Spleen (tissue), 13 donors: ENCODE measurements at regions of chr20 and their contacts with region 1.

Region 1: DNA sequence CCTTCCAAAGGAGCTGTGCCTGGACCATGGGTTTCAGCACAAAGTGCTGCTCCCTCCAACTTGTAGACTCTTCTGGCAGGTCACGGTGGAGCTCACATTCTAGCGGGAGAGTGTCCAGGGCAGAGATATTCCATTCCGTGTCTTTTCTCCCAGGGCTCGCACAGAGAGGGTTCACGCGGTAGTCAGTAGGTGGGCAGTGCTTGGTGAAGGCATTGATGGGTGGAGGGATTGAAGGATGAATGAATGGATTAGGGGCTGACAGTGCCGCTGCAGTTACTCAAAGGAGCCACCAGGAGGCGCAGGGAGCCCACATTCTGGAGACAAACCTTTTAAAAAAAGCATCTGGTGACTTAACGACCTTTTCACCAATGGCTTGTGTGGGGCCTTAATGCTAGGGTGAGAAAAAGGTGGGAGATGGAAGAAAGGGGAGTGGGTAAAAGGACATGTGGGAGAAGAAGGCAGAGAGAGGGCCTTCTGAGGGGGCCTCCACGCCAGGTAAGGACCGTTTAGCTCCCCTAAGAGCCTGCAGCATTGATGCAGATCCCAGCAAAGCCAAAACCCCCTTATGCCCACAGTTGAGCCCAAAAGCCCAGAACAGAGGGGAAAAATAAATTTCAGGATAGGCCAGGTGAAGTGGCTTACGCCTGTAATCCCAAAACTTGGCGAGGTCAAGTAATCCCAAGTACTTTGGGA is 17.5 kb upstream of the FAM110A start:
- DNase-seq: peak; percentile 82
- H3K4me3 ChIP-seq: no peak overlapping the region
- H3K27ac ChIP-seq: no peak overlapping the region
- H3K4me1 ChIP-seq: peaks cover 0 to 6% (median 3%) of the 10 kb centered on the region in 6 donors
- H3K27me3 ChIP-seq: peaks cover 0 to 37% (median 0%) of the 10 kb centered on the region in 7 donors
- CTCF ChIP-seq: peak; percentile 94 to 99 (median 97)
- POLR2A ChIP-seq: no peak

Region 2: DNA sequence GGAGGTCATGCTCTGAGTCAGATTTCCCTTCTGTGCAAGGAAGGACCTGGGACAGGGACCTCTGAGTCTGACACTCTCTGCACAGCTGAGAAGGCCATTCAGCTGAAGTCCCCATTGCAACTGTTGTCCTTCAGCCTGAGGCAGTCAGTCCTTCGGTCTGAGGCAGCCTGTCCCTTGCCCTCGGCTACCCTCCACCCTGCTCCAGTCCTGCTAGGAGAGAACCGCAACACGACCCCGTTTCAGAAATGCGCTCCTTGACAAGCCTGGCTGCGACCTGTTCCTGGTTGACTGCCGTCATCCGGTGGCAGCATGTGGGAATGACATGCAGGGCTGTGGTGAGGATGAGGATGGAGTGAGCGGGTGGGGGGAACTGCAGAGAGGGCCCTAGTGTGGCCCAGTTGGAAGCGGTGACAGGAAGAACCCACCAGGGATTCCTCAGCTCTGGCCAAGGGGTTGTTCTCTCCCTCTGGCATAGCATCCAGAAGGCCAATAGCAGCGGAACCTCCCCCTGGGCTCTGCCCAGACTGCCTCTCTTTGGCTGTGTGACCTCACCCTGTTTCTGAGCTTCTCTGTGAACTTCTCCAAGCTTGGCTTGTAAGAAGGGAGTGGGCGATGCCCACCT is 140.4 kb after region 1 on chr20:
- intact Hi-C with region 1: loop called (anchors 2 kb)
- DNase-seq: peak; percentile 91
- H3K4me3 ChIP-seq: no peak overlapping the region
- H3K27ac ChIP-seq: no peak overlapping the region
- H3K4me1 ChIP-seq: peaks cover 0 to 15% (median 7%) of the 10 kb centered on the region in 6 donors
- H3K27me3 ChIP-seq: peaks cover 0 to 92% (median 21%) of the 10 kb centered on the region in 7 donors
- CTCF ChIP-seq: peak; percentile 92 to 99 (median 98)
- POLR2A ChIP-seq: no peak

Region 3: GRCh38 chr20:1108437-1108920 is 292.4 kb after region 1 on chr20:
- intact Hi-C with region 1: loop called (anchors 5 kb)
- DNase-seq: peak; percentile 81
- H3K4me3 ChIP-seq: no peak overlapping the region
- H3K27ac ChIP-seq: no peak overlapping the region
- H3K4me1 ChIP-seq: peaks cover 0 to 6% (median 0%) of the 10 kb centered on the region in 6 donors
- H3K27me3 ChIP-seq: no peaks in the 10 kb centered on the region
- CTCF ChIP-seq: peak in 10 of 11 experiments; percentile 41 to 84 (median 68)
- POLR2A ChIP-seq: no peak